B cell (primary cell): ENCODE measurements at regions of chr11 and their contacts with region 1.

Region 1: GRCh38 chr11:76318744-76319384 is 62.1 kb downstream of the THAP12 start:
- DNase-seq: peak; percentile 88
- ATAC-seq: peak; percentile 96
- H3K4me3 ChIP-seq: no peak overlapping the region
- H3K4me3 Mint-ChIP-seq: no peak overlapping the region
- H3K27ac ChIP-seq: no peak overlapping the region
- H3K27ac Mint-ChIP-seq: no peak overlapping the region
- H3K4me1 ChIP-seq: no peaks in the 10 kb centered on the region
- H3K4me1 Mint-ChIP-seq: no peaks in the 10 kb centered on the region
- H3K27me3 ChIP-seq: peaks cover 0 to 33% (median 19%) of the 10 kb centered on the region in 4 experiments
- H3K27me3 Mint-ChIP-seq: peaks cover 33% of the 10 kb centered on the region
- CTCF ChIP-seq: peak; percentile 86

Region 2: DNA sequence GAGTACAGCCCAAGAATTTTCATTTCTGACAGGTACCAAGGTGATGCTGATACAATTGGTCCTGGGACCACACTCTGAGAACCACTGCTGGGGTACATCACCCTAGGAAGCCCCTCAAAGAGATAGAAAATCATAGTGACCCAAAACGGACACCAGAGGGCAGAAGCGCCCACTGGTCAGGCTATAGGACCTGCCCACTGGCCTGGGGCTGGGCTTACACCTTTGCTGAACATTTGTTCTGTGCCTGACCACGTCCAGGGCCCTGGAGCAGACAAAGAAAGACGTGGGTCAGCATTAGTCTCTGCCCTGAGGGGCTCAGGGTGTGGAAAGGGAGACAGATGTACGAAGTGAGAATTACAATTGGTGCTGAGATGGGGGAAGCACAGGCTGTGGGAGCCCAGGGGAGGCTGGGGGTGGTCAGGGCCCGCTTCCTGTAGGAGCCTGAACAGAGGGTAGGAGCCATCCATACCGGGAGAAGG is 771.2 kb before region 1 on chr11:
- CTCF ChIA-PET with region 1: interaction called, 4 read pairs
- POLR2A ChIA-PET with region 1: no interaction called
- intact Hi-C with region 1: loop called (anchors 1 kb)
- DNase-seq: peak; percentile 66
- ATAC-seq: peak; percentile 47
- H3K4me3 ChIP-seq: no peak overlapping the region
- H3K4me3 Mint-ChIP-seq: no peak overlapping the region
- H3K27ac ChIP-seq: no peak overlapping the region
- H3K27ac Mint-ChIP-seq: no peak overlapping the region
- H3K4me1 ChIP-seq: no peaks in the 10 kb centered on the region
- H3K4me1 Mint-ChIP-seq: no peaks in the 10 kb centered on the region
- H3K27me3 ChIP-seq: peaks cover 0 to 20% (median 5%) of the 10 kb centered on the region in 4 experiments
- H3K27me3 Mint-ChIP-seq: peaks cover 14% of the 10 kb centered on the region
- CTCF ChIP-seq: peak; percentile 84

Region 3: DNA sequence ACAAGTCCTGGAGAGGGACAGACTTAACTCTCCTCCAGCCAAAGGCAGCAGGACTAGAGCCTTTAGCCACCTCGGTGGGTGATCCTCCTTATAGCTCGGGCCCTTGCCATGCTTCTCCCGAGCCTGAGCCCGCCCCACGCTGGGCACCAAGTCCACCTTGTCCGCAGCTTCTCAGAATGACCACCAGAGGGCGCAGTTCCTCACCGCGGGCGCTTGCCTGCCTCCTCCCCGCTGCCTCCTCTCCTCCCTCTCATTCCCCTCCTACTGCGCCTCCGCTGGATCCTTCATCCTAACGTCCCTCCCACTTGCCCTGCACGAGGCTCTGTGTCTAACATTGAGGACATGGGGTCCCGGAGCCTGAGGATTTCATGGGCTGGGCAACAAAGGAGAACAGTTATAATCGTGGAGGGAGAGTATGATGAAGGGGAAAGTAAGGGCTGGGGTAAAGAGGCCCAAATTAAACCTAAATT is 612.6 kb before region 1 on chr11:
- CTCF ChIA-PET with region 1: interaction called, 7 read pairs
- POLR2A ChIA-PET with region 1: no interaction called
- intact Hi-C with region 1: loop called (anchors 5 kb)
- DNase-seq: peak; percentile 82
- ATAC-seq: peak; percentile 84
- H3K4me3 ChIP-seq: no peak overlapping the region
- H3K4me3 Mint-ChIP-seq: no peak overlapping the region
- H3K27ac ChIP-seq: no peak overlapping the region
- H3K27ac Mint-ChIP-seq: no peak overlapping the region
- H3K4me1 ChIP-seq: peaks cover 0 to 7% of the 10 kb centered on the region in 2 donors
- H3K4me1 Mint-ChIP-seq: peaks cover 12% of the 10 kb centered on the region
- H3K27me3 ChIP-seq: peaks cover 0 to 8% (median 2%) of the 10 kb centered on the region in 4 experiments
- H3K27me3 Mint-ChIP-seq: peaks cover 11% of the 10 kb centered on the region
- CTCF ChIP-seq: peak; percentile 97

Region 4: DNA sequence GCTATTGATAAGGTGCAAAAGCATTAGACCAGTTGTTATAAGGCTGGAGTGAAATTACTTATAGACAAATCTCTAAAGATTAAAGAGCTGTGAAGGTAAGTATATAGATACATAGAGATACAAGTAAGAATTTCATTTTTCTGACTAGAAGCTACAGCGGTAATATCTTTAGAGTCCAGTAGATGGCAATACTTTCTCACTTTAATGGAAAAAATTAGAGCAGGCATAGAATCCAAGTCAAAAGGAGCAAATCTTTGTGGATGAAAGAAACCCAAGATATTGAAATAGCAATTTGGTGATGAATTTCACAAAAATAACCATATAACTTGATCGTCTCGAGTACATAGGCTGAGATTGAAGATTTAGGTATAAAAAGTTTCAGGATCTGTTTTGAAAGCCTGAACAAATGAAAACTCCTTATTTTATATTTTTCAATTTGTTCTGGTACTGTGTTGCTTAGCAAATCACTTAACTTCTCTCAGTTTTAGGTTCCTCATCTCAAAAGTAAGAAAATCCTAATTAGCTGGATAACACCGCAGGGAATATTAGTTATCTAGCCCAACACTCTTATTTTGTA is 421.9 kb before region 1 on chr11:
- CTCF ChIA-PET with region 1: interaction called, 33 read pairs
- POLR2A ChIA-PET with region 1: no interaction called
- intact Hi-C with region 1: loop called (anchors 1 kb)
- DNase-seq: peak; percentile 52
- ATAC-seq: no peak
- H3K4me3 ChIP-seq: no peak overlapping the region
- H3K4me3 Mint-ChIP-seq: no peak overlapping the region
- H3K27ac ChIP-seq: peak overlapping the region in 1 of 2 donors; percentile 6
- H3K27ac Mint-ChIP-seq: no peak overlapping the region
- H3K4me1 ChIP-seq: peaks cover 19% of the 10 kb centered on the region in 2 donors
- H3K4me1 Mint-ChIP-seq: peaks cover 41% of the 10 kb centered on the region
- H3K27me3 ChIP-seq: no peaks in the 10 kb centered on the region
- H3K27me3 Mint-ChIP-seq: no peaks in the 10 kb centered on the region
- CTCF ChIP-seq: peak; percentile 87

Region 5: DNA sequence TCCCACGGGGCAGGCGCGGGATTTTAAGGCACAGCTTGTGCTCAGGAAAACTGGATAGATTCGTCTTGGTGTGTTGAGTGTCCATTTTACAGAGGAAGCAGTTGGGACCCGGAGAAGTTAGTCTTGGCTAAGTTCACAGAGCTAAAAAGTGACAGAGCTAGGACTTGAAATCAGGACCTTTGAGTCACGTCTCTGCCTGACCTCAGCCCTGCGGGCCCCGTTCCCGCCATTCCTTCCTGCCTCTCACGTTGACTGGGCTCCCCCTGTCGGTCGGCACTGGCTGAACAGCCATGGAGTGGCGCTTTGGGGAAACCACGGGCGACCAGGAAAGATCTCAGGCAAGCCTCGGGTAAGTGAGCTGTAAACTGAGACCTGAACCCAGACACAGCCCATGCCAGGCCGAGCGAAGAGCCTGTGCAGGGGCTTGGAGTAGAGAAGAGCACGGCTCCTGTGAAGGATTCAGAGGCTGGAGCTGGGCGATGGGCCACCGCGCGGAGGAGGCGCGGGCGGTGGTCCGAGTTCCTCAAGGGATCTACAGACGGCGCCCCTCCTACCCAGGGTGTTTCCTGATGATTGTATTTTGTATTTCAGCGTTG is 166.7 kb before region 1 on chr11:
- CTCF ChIA-PET with region 1: interaction called, 9 read pairs
- POLR2A ChIA-PET with region 1: no interaction called
- intact Hi-C with region 1: loop called (anchors 2 kb)
- DNase-seq: peak; percentile 80
- ATAC-seq: peak; percentile 82
- H3K4me3 ChIP-seq: peak overlapping the region; percentile 15 to 55 (median 47)
- H3K4me3 Mint-ChIP-seq: peak overlapping the region; percentile 74
- H3K27ac ChIP-seq: no peak overlapping the region
- H3K27ac Mint-ChIP-seq: peak overlapping the region; percentile 21
- H3K4me1 ChIP-seq: peaks cover 18 to 21% of the 10 kb centered on the region in 2 donors
- H3K4me1 Mint-ChIP-seq: peaks cover 25% of the 10 kb centered on the region
- H3K27me3 ChIP-seq: no peaks in the 10 kb centered on the region
- H3K27me3 Mint-ChIP-seq: no peaks in the 10 kb centered on the region
- CTCF ChIP-seq: peak; percentile 93